ENCODE measurements at regions of chr19 and their contacts with region 1.

Region 1: GRCh38 chr19:12139885-12140547 is at the start of gene ZNF20:
- DNase-seq: peak; percentile 86
- H3K4me3 Mint-ChIP-seq: peak within 1 kb of the TSS; percentile 93
- H3K27ac Mint-ChIP-seq: peak within 1 kb of the TSS; percentile 80
- H3K4me1 Mint-ChIP-seq: peaks cover 34% of the 10 kb centered on the region
- H3K27me3 Mint-ChIP-seq: no peaks in the 10 kb centered on the region
- total RNA-seq, gene ZNF20: 2.8 and 3.5 TPM in 2 replicates

Region 2: GRCh38 chr19:11814029-11814699 is 325.9 kb before region 1 on chr19 and contains the start of gene ZNF440:
- intact Hi-C with region 1: loop called (anchors 1 kb)
- DNase-seq: peak; percentile 84
- H3K4me3 Mint-ChIP-seq: peak within 1 kb of the TSS; percentile 88
- H3K27ac Mint-ChIP-seq: peak within 1 kb of the TSS; percentile 69
- H3K4me1 Mint-ChIP-seq: peaks cover 13% of the 10 kb centered on the region
- H3K27me3 Mint-ChIP-seq: peaks cover 1% of the 10 kb centered on the region
- total RNA-seq, gene ZNF440: 6.7 and 9.2 TPM in 2 replicates

Region 3: DNA sequence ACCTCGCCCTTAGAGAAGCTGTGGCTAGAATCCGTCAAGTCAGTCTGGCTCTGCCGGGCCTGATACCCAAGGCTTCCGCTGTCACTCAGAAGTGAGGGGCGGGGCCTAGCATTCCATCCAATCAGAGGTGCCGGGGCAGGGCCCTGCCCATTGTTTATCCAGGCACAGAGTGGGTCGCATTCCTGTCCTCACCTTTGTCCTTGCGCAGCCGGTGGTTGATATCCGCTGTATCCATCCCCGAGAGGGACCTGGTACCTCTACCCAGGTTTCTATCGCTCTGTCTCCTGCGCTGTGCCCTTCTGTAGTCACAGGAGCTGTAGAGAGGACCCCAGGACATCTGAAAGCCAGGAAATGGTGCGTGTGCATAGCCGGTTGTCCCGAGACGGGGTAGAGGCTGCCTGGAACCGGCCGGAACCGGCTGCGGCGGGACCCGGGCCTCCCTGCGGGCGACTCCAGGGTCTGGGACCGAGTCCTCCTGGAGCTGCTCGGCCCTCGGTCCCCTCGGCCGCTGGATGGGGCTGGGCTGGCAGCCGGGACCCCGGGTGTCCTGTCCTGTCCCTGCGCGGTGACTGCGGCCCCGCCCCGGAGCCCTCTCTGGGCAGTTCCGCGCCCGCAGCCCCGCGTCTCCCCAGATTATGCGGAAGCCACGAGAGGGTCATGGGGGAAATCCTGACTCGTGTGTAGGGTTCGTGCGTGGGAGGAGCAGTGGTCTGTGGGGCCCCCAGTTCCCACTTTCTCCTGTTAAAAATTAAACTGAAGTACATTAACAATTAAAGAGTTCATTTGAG is 175.0 kb before region 1 on chr19 and contains the start of gene ZNF763:
- intact Hi-C with region 1: loop called (anchors 1 kb)
- DNase-seq: peak; percentile 69
- H3K4me3 Mint-ChIP-seq: peak within 1 kb of the TSS; percentile 81
- H3K27ac Mint-ChIP-seq: peak within 1 kb of the TSS; percentile 56
- H3K4me1 Mint-ChIP-seq: peaks cover 20% of the 10 kb centered on the region
- H3K27me3 Mint-ChIP-seq: no peaks in the 10 kb centered on the region
- total RNA-seq, gene ZNF763: 0.49 and 1.1 TPM in 2 replicates

Region 4: GRCh38 chr19:12055783-12056182 is 84.2 kb before region 1 on chr19:
- intact Hi-C with region 1: loop called (anchors 1 kb)
- DNase-seq: no peak
- H3K4me3 Mint-ChIP-seq: no peak overlapping the region
- H3K27ac Mint-ChIP-seq: no peak overlapping the region
- H3K4me1 Mint-ChIP-seq: peaks cover 5% of the 10 kb centered on the region
- H3K27me3 Mint-ChIP-seq: peaks cover 3% of the 10 kb centered on the region

Region 5: GRCh38 chr19:12162882-12163806 is 23.1 kb after region 1 on chr19 and contains the start of gene ZNF136:
- intact Hi-C with region 1: loop called (anchors 1 kb)
- DNase-seq: peak; percentile 90
- H3K4me3 Mint-ChIP-seq: peak within 1 kb of the TSS; percentile 94
- H3K27ac Mint-ChIP-seq: peak within 1 kb of the TSS; percentile 93
- H3K4me1 Mint-ChIP-seq: peaks cover 28% of the 10 kb centered on the region
- H3K27me3 Mint-ChIP-seq: no peaks in the 10 kb centered on the region
- total RNA-seq, gene ZNF136: 10.1 and 10.8 TPM in 2 replicates

Region 6: GRCh38 chr19:12255372-12255771 is 115.4 kb after region 1 on chr19:
- intact Hi-C with region 1: no loop called
- DNase-seq: no peak
- H3K4me3 Mint-ChIP-seq: no peak overlapping the region
- H3K27ac Mint-ChIP-seq: no peak overlapping the region
- H3K4me1 Mint-ChIP-seq: no peaks in the 10 kb centered on the region
- H3K27me3 Mint-ChIP-seq: no peaks in the 10 kb centered on the region

Region 7: GRCh38 chr19:12440541-12441316 is 300.7 kb after region 1 on chr19 and contains the start of gene ZNF443:
- intact Hi-C with region 1: loop called (anchors 1 kb)
- DNase-seq: peak; percentile 98
- H3K4me3 Mint-ChIP-seq: peak within 1 kb of the TSS; percentile 100
- H3K27ac Mint-ChIP-seq: peak within 1 kb of the TSS; percentile 95
- H3K4me1 Mint-ChIP-seq: no peaks in the 10 kb centered on the region
- H3K27me3 Mint-ChIP-seq: no peaks in the 10 kb centered on the region
- total RNA-seq, gene ZNF443: 3.8 TPM in 2 replicates

Measured in activated T-helper 1 cell treated with anti-CD3 and anti-CD28 coated beads, Interleukin-12 subunit alpha, Interleukin-12 subunit beta, Interleukin-2, Interleukin-4 antibody, amounts not matched to agents 30 ng/mL and 10 ng/mL and 1 ng/mL, durations not matched to agents 14 hours and 24 hours and 36 hours (primary cell).